ENCODE measurements at regions of chr6 and their contacts with region 1.

Region 1: GRCh38 chr6:151317103-151317994 is 74.0 kb downstream of the ZBTB2 start:
- DNase-seq: no peak
- H3K4me3 ChIP-seq: no peak overlapping the region
- H3K27ac ChIP-seq: peak overlapping the region; percentile 13 to 24
- H3K4me1 ChIP-seq: peaks cover 7% of the 10 kb centered on the region
- H3K27me3 ChIP-seq: no peaks in the 10 kb centered on the region
- CTCF ChIP-seq: no peak
- EP300 ChIP-seq: no peak
- POLR2A ChIP-seq: no peak

Region 2: DNA sequence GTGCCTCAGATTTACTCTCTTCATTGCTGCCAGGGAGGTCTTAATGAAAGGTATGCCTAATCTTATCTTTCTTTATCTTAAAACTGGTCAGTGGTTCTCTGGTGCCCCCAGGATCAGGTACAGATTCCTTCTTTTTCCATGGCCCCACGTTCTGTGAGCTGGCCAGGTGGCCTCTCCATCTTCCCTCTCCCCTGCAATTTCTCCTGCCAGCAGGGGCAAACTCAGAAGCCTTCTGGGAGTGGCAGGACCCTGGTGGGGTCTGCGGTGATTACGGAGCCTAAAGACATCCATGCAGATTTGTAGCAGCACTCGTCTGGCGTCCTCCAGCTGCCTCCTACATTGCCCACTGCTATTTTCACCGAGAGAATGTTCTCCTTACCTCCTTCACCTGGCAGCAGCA is 272.3 kb after region 1 on chr6:
- intact Hi-C with region 1: no loop called
- DNase-seq: no peak
- H3K4me3 ChIP-seq: no peak overlapping the region
- H3K27ac ChIP-seq: no peak overlapping the region
- H3K4me1 ChIP-seq: no peaks in the 10 kb centered on the region
- H3K27me3 ChIP-seq: no peaks in the 10 kb centered on the region
- CTCF ChIP-seq: no peak
- EP300 ChIP-seq: no peak
- POLR2A ChIP-seq: no peak

Region 3: GRCh38 chr6:151614699-151615098 is 297.4 kb after region 1 on chr6:
- intact Hi-C with region 1: loop called in 1 of 4 experiments (anchors 5 kb)
- DNase-seq: no peak
- H3K4me3 ChIP-seq: no peak overlapping the region
- H3K27ac ChIP-seq: no peak overlapping the region
- H3K4me1 ChIP-seq: peaks cover 8% of the 10 kb centered on the region
- H3K27me3 ChIP-seq: no peaks in the 10 kb centered on the region
- CTCF ChIP-seq: no peak
- EP300 ChIP-seq: no peak
- POLR2A ChIP-seq: no peak

Region 4: GRCh38 chr6:151885234-151885633 is 567.9 kb after region 1 on chr6:
- intact Hi-C with region 1: no loop called
- DNase-seq: no peak
- H3K4me3 ChIP-seq: no peak overlapping the region
- H3K27ac ChIP-seq: no peak overlapping the region
- H3K4me1 ChIP-seq: no peaks in the 10 kb centered on the region
- H3K27me3 ChIP-seq: no peaks in the 10 kb centered on the region
- CTCF ChIP-seq: no peak
- EP300 ChIP-seq: no peak
- POLR2A ChIP-seq: no peak

Measured in ovary (tissue), 10 donors.